Upper lobe of right lung (tissue), 1 donor: ENCODE measurements at regions of chr4 and their contacts with region 1.

Region 1: DNA sequence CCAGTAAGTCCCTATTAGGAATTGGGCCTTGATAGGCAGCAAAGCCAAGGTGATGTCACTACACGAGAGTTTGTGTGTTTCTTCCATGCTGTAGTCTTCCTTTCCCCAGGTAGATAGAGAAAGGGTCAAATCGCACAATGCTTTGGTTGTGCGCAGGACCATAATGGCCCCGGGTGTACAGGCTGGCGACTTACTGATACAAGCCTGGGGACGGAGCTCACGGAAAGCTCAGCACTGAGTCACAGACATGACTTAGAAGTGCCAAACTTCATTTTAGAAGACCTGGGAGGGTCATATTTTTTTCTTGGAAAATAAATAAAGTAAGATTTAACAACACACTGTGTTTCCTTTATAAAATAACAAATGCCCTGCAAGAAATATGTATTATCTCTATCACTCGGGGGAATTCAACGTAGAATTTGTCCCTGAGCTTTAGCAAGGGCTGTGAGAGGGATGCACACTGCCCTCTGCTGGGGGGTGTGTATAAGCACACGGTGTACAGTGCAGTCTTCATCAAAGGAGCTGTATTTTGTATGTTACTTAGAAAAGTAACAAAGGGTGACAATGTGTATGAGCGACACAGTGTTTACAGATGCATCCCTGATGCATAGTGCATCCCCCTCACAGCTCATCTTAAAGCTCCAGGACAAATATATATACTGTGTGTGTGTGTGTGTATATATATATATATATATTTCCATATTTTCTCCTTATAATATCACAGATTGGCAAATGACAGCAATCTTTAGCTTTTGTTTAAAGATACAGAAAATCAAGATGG is 254.5 kb upstream of the VEGFC start:
- DNase-seq: peak; percentile 67
- ATAC-seq: peak; percentile 92
- H3K4me3 ChIP-seq: no peak overlapping the region
- H3K27ac ChIP-seq: no peak overlapping the region
- H3K4me1 ChIP-seq: peaks cover 8% of the 10 kb centered on the region
- H3K27me3 ChIP-seq: no peaks in the 10 kb centered on the region
- CTCF ChIP-seq: peak; percentile 86

Region 2: GRCh38 chr4:176383273-176384077 is 663.8 kb before region 1 on chr4:
- intact Hi-C with region 1: loop called (anchors 10 kb)
- DNase-seq: no peak
- ATAC-seq: no peak
- H3K4me3 ChIP-seq: no peak overlapping the region
- H3K27ac ChIP-seq: no peak overlapping the region
- H3K4me1 ChIP-seq: no peaks in the 10 kb centered on the region
- H3K27me3 ChIP-seq: no peaks in the 10 kb centered on the region
- CTCF ChIP-seq: no peak

Region 3: DNA sequence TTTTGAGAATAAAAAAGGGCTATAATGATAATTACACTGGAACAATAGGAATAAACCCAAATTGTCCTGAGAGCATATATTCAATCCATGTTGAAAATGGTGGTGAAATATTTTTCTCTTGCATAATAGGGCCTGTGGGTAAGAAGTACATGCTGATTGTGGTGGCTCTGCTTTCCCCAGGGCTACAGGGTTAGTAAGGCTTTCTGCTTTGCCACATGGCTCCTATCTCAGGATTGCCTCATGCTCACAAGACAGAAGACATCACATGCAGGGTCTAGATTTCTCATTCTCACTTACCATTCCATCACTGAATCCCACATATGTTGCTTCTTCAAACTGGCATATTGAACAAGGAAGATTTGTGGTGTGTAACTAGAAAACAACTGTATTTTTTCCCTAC is 242.1 kb before region 1 on chr4:
- intact Hi-C with region 1: loop called (anchors 5 kb)
- DNase-seq: no peak
- ATAC-seq: no peak
- H3K4me3 ChIP-seq: no peak overlapping the region
- H3K27ac ChIP-seq: no peak overlapping the region
- H3K4me1 ChIP-seq: no peaks in the 10 kb centered on the region
- H3K27me3 ChIP-seq: no peaks in the 10 kb centered on the region
- CTCF ChIP-seq: no peak